K562 (cell line): ENCODE measurements at regions of chr4 and their contacts with region 1.

Region 1: DNA sequence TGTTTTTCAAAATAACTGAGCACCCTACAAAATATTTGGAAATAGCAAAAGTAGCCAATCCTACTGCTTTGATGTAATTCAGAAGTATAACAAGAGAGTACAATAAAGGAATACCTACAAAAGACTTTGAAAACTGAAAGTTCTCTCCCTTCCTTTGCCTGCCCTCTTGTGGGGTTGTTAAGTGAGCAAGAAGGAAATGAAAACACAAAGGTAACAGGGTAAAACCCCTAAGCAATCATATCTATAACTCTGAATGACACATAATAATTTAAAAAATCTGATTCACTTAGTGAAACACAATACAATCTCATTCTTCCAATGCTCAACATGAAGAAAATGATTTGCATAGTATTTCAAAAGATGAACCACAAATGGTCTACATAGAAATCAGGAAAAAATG is 98.2 kb downstream of the FRYL start:
- DNase-seq: peak in 1 of 4 experiments; percentile 59
- ATAC-seq: peak; percentile 58
- H3K4me3 ChIP-seq: no peak overlapping the region
- H3K27ac ChIP-seq: peak overlapping the region; percentile 70; the same call in 2 of the 3 replicates
- H3K4me1 ChIP-seq: peaks cover 2 to 29% of the 10 kb centered on the region in 2 experiments; a peak in 4 of 5 replicates
- H3K27me3 ChIP-seq: no peaks in the 10 kb centered on the region
- CTCF ChIP-seq: peak; percentile 17 to 64 (median 20); a peak in 3 of 6 replicates
- EP300 ChIP-seq: no peak
- POLR2A ChIP-seq: no peak
- RAD21 ChIP-seq: peak; percentile 43 to 74; a peak in 3 of 4 replicates

Region 2: DNA sequence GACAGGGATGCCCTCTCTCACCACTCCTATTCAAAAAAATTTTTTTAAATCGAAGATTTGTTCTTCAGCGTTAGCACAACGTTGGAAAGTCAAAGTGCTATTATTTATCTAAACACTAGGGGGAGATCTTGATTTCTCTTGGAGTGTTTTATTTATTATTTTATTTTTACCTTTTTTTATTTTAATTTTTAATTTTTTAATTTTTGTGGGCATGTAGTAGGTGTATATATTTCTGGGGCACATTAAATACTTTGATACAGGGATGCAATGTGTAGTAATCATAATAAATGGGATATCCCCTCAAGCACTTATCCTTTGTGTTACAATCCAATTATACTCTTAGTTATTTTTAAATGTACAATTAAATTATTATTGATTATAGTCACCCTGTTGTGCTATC is 236.2 kb before region 1 on chr4:
- CTCF ChIA-PET with region 1: no interaction called
- POLR2A ChIA-PET with region 1: no interaction called
- in situ Hi-C with region 1: no loop called
- intact Hi-C with region 1: loop called (anchors 5 kb)
- DNase-seq: no peak
- ATAC-seq: no peak
- H3K4me3 ChIP-seq: no peak overlapping the region
- H3K27ac ChIP-seq: no peak overlapping the region
- H3K4me1 ChIP-seq: peaks cover 0 to 2% of the 10 kb centered on the region in 2 experiments; a peak in 3 of 5 replicates
- H3K27me3 ChIP-seq: no peaks in the 10 kb centered on the region
- CTCF ChIP-seq: peak in 2 of 3 experiments; percentile 15 to 66; a peak in 2 of 6 replicates
- EP300 ChIP-seq: no peak
- POLR2A ChIP-seq: no peak
- RAD21 ChIP-seq: peak; percentile 61 to 67

Region 3: GRCh38 chr4:48588230-48589097 is 93.4 kb before region 1 on chr4:
- CTCF ChIA-PET with region 1: no interaction called
- POLR2A ChIA-PET with region 1: no interaction called
- in situ Hi-C with region 1: loop called (anchors 5 kb)
- intact Hi-C with region 1: no loop called
- DNase-seq: peak in 1 of 4 experiments; percentile 11
- ATAC-seq: peak; percentile 68
- H3K4me3 ChIP-seq: no peak overlapping the region
- H3K27ac ChIP-seq: no peak overlapping the region
- H3K4me1 ChIP-seq: peaks cover 5 to 10% of the 10 kb centered on the region in 2 experiments; a peak in 3 of 5 replicates
- H3K27me3 ChIP-seq: no peaks in the 10 kb centered on the region
- CTCF ChIP-seq: peak in 2 of 3 experiments; percentile 7 to 27; a peak in 2 of 6 replicates
- EP300 ChIP-seq: no peak
- POLR2A ChIP-seq: no peak
- RAD21 ChIP-seq: peak in 1 of 2 experiments; percentile 26; a peak in 1 of 4 replicates

Region 4: DNA sequence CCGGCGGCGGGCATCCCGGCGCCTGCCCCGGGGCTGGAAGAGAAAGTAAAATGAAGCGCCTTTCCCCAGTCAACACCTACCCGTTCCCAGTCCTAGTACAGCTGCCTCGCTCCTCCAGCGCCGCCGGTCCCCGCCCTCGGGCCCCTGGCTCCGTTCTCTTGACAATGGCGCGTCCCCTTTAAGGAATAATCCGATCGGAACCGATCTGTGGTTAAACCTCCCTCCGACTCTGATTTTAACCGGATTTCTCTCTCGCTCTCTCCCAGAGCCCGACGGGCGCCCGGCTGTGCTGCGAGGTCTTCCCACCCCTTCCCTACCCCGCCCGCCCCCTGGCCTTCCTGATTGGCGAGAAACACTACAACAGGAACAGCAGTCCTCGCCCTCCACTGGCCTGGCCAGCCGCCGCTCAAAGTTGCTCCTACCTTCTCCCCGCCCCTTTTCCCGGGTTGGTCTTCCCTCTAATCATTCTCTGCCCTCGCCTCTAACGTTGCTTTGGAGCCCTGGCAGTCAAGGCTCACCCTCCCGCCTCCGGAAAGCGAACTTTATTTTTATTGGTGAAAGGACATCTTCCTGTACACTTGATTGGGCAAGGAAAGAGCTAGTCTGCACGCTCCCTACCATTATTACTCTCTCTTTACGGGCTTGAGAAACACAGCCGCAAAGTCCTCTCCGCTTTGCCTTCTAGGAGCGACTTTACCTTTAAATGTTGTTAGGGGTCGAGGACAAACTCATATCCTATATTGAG is 98.3 kb after region 1 on chr4 and contains the start of gene FRYL:
- CTCF ChIA-PET with region 1: no interaction called
- POLR2A ChIA-PET with region 1: interaction called, 3 read pairs
- in situ Hi-C with region 1: no loop called
- intact Hi-C with region 1: loop called (anchors 2 kb)
- DNase-seq: peak; percentile 97 to 99 (median 98)
- ATAC-seq: peak; percentile 90
- H3K4me3 ChIP-seq: peak within 1 kb of the TSS; percentile 88
- H3K27ac ChIP-seq: peak within 1 kb of the TSS; percentile 88
- H3K4me1 ChIP-seq: peaks cover 9 to 20% of the 10 kb centered on the region in 2 experiments
- H3K27me3 ChIP-seq: no peaks in the 10 kb centered on the region
- CTCF ChIP-seq: no peak
- EP300 ChIP-seq: no peak
- POLR2A ChIP-seq: peak; percentile 82
- RAD21 ChIP-seq: no peak
- polyA plus RNA-seq, gene FRYL: 7.2 TPM

Region 5: GRCh38 chr4:48963042-48963679 is 281.3 kb after region 1 on chr4:
- CTCF ChIA-PET with region 1: no interaction called
- POLR2A ChIA-PET with region 1: no interaction called
- in situ Hi-C with region 1: no loop called
- intact Hi-C with region 1: loop called (anchors 2 kb)
- DNase-seq: peak; percentile 72 to 86 (median 76)
- ATAC-seq: peak; percentile 93
- H3K4me3 ChIP-seq: no peak overlapping the region
- H3K27ac ChIP-seq: no peak overlapping the region
- H3K4me1 ChIP-seq: no peaks in the 10 kb centered on the region
- H3K27me3 ChIP-seq: no peaks in the 10 kb centered on the region
- CTCF ChIP-seq: peak; percentile 98 to 100 (median 100)
- EP300 ChIP-seq: no peak
- POLR2A ChIP-seq: no peak
- RAD21 ChIP-seq: peak; percentile 95